ENCODE measurements at regions of chr14 and their contacts with region 1.

Region 1: GRCh38 chr14:104826189-104826860 is 25.4 kb downstream of the ZBTB42 start:
- DNase-seq: peak; percentile 95
- H3K4me3 Mint-ChIP-seq: peak overlapping the region; percentile 74
- H3K27ac Mint-ChIP-seq: no peak overlapping the region
- H3K4me1 Mint-ChIP-seq: peaks cover 17% of the 10 kb centered on the region
- H3K27me3 Mint-ChIP-seq: peaks cover 6% of the 10 kb centered on the region

Region 2: GRCh38 chr14:104723648-104724406 is 102.5 kb before region 1 on chr14 and contains the start of gene ADSS1:
- CTCF ChIA-PET with region 1: no interaction called
- POLR2A ChIA-PET with region 1: no interaction called
- intact Hi-C with region 1: loop called (anchors 2 kb)
- DNase-seq: peak; percentile 66
- H3K4me3 Mint-ChIP-seq: peak within 1 kb of the TSS; percentile 61
- H3K27ac Mint-ChIP-seq: no peak within 1 kb of the TSS
- H3K4me1 Mint-ChIP-seq: no peaks in the 10 kb centered on the region
- H3K27me3 Mint-ChIP-seq: no peaks in the 10 kb centered on the region
- total RNA-seq, gene ADSS1: 2.3 to 3.3 TPM

Region 3: GRCh38 chr14:104768437-104769323 is 57.6 kb before region 1 on chr14:
- CTCF ChIA-PET with region 1: interaction called, 99 read pairs
- POLR2A ChIA-PET with region 1: no interaction called
- intact Hi-C with region 1: loop called (anchors 1 kb)
- DNase-seq: peak; percentile 94
- H3K4me3 Mint-ChIP-seq: no peak overlapping the region
- H3K27ac Mint-ChIP-seq: peak overlapping the region; percentile 49
- H3K4me1 Mint-ChIP-seq: no peaks in the 10 kb centered on the region
- H3K27me3 Mint-ChIP-seq: no peaks in the 10 kb centered on the region

Region 4: GRCh38 chr14:104800015-104800770 is 26.1 kb before region 1 on chr14:
- CTCF ChIA-PET with region 1: interaction called, 12 read pairs
- POLR2A ChIA-PET with region 1: no interaction called
- intact Hi-C with region 1: loop called (anchors 2 kb)
- DNase-seq: peak; percentile 84
- H3K4me3 Mint-ChIP-seq: peak overlapping the region; percentile 36
- H3K27ac Mint-ChIP-seq: peak overlapping the region; percentile 52
- H3K4me1 Mint-ChIP-seq: peaks cover 27% of the 10 kb centered on the region
- H3K27me3 Mint-ChIP-seq: no peaks in the 10 kb centered on the region

Region 5: GRCh38 chr14:104813291-104813690 is 13.0 kb before region 1 on chr14:
- CTCF ChIA-PET with region 1: no interaction called
- POLR2A ChIA-PET with region 1: no interaction called
- intact Hi-C with region 1: no loop called
- DNase-seq: no peak
- H3K4me3 Mint-ChIP-seq: no peak overlapping the region
- H3K27ac Mint-ChIP-seq: peak overlapping the region; percentile 45
- H3K4me1 Mint-ChIP-seq: peaks cover 20% of the 10 kb centered on the region
- H3K27me3 Mint-ChIP-seq: no peaks in the 10 kb centered on the region